ENCODE measurements at regions of chr12 and their contacts with region 1.

Region 1: DNA sequence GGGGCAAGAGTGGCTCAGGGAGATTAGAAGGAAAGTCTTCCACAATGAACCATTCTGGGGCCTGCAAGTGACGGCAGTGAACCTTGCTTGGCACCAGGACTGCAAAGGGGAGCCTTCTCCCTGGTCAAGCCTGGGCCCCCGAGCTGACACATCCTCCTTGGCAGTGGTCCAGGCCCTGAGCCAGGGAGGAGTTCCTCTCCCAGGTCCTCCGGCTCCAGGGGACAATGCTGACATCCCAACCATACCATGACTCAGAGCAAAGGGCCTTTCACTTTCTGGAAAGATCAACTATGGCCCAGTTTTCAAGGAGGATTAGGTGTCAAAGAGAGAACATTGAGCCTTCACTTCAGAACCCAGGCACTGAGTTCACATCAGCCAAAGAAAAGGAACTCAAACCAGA is 756.5 kb upstream of the TBX3 start:
- DNase-seq: peak; percentile 37
- H3K4me3 ChIP-seq: no peak overlapping the region
- H3K27ac ChIP-seq: no peak overlapping the region
- H3K4me1 ChIP-seq: peaks cover 3% of the 10 kb centered on the region
- H3K27me3 ChIP-seq: no peaks in the 10 kb centered on the region
- CTCF ChIP-seq: no peak

Region 2: DNA sequence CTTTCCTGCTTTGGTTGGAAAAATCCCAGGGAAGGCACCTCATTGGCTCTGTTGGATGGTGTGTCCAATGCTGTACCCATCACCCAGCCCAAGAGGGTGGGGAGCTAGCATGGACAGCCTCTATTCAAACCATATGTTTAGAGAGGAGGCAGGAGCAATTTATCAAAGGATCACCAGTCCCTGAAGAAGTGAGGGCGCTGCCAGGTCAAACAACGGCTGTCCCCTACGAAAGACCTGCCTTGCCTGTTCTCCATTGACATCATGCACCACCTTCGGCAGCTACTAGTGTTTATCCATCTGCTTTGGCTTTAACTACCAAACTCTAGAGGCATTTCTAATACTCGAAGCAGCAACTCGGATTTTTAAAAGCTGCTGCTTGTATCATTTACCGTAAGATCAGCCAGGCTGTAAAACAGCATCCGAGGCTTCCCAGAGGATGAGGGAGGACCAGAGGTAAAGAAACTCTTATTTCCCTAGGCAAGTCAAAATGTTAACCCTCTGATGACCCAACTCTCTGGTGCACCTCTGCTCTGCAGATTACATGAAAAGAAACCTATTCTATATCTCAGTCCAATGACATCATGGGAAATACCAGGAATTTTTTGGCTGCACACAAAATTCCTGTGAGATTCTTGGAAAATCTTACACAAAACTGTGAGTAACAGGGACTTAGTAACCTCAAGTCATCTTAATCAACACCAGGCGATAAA is 35.5 kb before region 1 on chr12:
- CTCF ChIA-PET with region 1: no interaction called
- dilution Hi-C with region 1: loop called (anchors 5 kb)
- in situ Hi-C with region 1: no loop called
- intact Hi-C with region 1: no loop called
- DNase-seq: peak; percentile 64
- H3K4me3 ChIP-seq: no peak overlapping the region
- H3K27ac ChIP-seq: no peak overlapping the region
- H3K4me1 ChIP-seq: peaks cover 6% of the 10 kb centered on the region
- H3K27me3 ChIP-seq: no peaks in the 10 kb centered on the region
- CTCF ChIP-seq: no peak

Region 3: DNA sequence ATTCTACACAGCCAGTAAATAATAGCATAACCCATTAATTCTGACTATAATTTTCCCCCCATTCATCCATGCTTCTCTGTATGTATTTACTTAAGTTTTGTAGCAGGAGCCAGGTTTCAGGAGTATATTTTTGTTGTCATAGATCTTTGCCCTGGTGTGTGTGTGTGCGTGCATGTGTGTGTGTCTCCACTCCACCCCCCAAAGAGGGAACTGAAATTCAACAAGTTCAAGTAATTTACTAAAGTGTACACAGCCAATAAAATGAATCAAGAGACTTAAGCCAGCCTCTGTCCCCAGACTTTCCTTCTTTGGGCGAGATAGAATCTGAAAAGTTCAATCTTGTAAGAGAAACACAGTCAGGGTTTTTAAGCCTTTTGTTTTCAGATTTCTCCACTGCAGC is 45.1 kb after region 1 on chr12:
- CTCF ChIA-PET with region 1: no interaction called
- dilution Hi-C with region 1: no loop called
- in situ Hi-C with region 1: no loop called
- intact Hi-C with region 1: no loop called
- DNase-seq: no peak
- H3K4me3 ChIP-seq: no peak overlapping the region
- H3K27ac ChIP-seq: no peak overlapping the region
- H3K4me1 ChIP-seq: no peaks in the 10 kb centered on the region
- H3K27me3 ChIP-seq: peaks cover 2% of the 10 kb centered on the region
- CTCF ChIP-seq: no peak

Region 4: DNA sequence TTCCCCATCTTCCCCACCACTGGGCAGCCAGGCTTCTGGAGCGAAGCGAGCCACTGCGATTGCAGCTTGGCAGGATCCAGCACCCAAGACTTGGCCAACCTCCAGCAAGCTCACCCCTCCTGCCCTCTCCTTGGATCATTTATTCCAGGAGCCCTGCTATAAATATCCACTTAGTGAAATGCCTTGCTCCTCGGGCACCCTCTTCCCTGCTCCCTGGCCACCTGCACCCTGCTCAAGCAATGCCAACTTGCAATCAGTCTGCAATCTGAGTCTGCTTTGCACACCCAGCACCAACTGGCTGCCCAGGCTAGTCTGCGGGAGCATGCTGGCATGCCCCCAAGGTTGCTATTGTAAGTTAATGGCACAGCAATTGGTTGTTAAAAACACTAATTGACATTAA is 171.0 kb after region 1 on chr12:
- CTCF ChIA-PET with region 1: no interaction called
- dilution Hi-C with region 1: no loop called
- in situ Hi-C with region 1: no loop called
- intact Hi-C with region 1: no loop called
- DNase-seq: no peak
- H3K4me3 ChIP-seq: no peak overlapping the region
- H3K27ac ChIP-seq: no peak overlapping the region
- H3K4me1 ChIP-seq: no peaks in the 10 kb centered on the region
- H3K27me3 ChIP-seq: no peaks in the 10 kb centered on the region
- CTCF ChIP-seq: no peak